MCF 10A (cell line): ENCODE measurements at regions of chr17 and their contacts with region 1.

Region 1: GRCh38 chr17:28057731-28058279 is 15.3 kb downstream of the NLK start:
- DNase-seq: peak; percentile 64
- H3K4me3 Mint-ChIP-seq: peak overlapping the region; percentile 44
- H3K27ac Mint-ChIP-seq: peak overlapping the region; percentile 75
- H3K4me1 Mint-ChIP-seq: peaks cover 14% of the 10 kb centered on the region
- H3K27me3 Mint-ChIP-seq: no peaks in the 10 kb centered on the region
- CTCF ChIP-seq: no peak

Region 2: GRCh38 chr17:28041068-28041843 is 16.5 kb before region 1 on chr17:
- CTCF ChIA-PET with region 1: no interaction called
- POLR2A ChIA-PET with region 1: interaction called, 23 read pairs
- intact Hi-C with region 1: no loop called
- DNase-seq: peak; percentile 99
- H3K4me3 Mint-ChIP-seq: peak overlapping the region; percentile 91
- H3K27ac Mint-ChIP-seq: peak overlapping the region; percentile 81
- H3K4me1 Mint-ChIP-seq: peaks cover 47% of the 10 kb centered on the region
- H3K27me3 Mint-ChIP-seq: no peaks in the 10 kb centered on the region
- CTCF ChIP-seq: no peak

Region 3: GRCh38 chr17:28086519-28086918 is 28.7 kb after region 1 on chr17:
- CTCF ChIA-PET with region 1: no interaction called
- POLR2A ChIA-PET with region 1: no interaction called
- intact Hi-C with region 1: no loop called
- DNase-seq: peak; percentile 13
- H3K4me3 Mint-ChIP-seq: no peak overlapping the region
- H3K27ac Mint-ChIP-seq: no peak overlapping the region
- H3K4me1 Mint-ChIP-seq: no peaks in the 10 kb centered on the region
- H3K27me3 Mint-ChIP-seq: no peaks in the 10 kb centered on the region
- CTCF ChIP-seq: no peak

Region 4: GRCh38 chr17:28112220-28113005 is 54.6 kb after region 1 on chr17:
- CTCF ChIA-PET with region 1: interaction called, 3 read pairs
- POLR2A ChIA-PET with region 1: interaction called, 15 read pairs
- intact Hi-C with region 1: no loop called
- DNase-seq: peak; percentile 19
- H3K4me3 Mint-ChIP-seq: peak overlapping the region; percentile 67
- H3K27ac Mint-ChIP-seq: peak overlapping the region; percentile 78
- H3K4me1 Mint-ChIP-seq: peaks cover 25% of the 10 kb centered on the region
- H3K27me3 Mint-ChIP-seq: no peaks in the 10 kb centered on the region
- CTCF ChIP-seq: no peak